Activated CD4-positive, alpha-beta T cell treated with anti-CD3 and anti-CD28 coated beads, Interleukin-2, amount 10 ng/mL, durations not matched to agents 7 days and 5 days (primary cell): ENCODE measurements at regions of chr17 and their contacts with region 1.

Region 1: DNA sequence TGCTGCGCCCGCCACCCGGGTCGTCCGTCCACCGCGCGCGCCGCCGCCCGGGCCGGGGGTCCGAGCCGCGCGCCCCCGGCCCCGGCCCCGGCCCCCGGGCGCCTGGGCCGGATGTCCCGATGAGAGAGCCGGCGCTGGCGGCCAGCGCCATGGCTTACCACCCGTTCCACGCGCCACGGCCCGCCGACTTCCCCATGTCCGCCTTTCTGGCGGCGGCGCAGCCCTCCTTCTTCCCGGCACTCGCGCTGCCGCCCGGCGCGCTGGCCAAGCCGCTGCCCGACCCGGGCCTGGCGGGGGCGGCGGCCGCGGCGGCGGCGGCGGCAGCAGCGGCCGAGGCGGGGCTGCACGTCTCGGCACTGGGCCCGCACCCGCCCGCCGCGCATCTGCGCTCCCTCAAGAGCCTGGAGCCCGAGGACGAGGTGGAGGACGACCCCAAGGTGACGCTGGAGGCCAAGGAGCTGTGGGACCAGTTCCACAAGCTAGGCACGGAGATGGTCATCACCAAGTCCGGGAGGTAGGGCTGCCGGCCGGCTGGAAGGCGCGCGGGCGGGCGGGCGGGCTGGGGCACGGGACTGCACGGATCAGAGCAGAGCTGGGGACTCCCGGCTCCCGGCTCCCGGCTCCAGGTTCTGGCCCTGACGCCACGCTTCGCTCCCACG is 544 bp downstream of the TBX2 start:
- DNase-seq: no peak
- H3K4me3 Mint-ChIP-seq: peak overlapping the region; percentile 38
- H3K27ac Mint-ChIP-seq: no peak overlapping the region
- H3K4me1 Mint-ChIP-seq: peaks cover 29% of the 10 kb centered on the region
- H3K27me3 Mint-ChIP-seq: peaks cover 61% of the 10 kb centered on the region

Region 2: DNA sequence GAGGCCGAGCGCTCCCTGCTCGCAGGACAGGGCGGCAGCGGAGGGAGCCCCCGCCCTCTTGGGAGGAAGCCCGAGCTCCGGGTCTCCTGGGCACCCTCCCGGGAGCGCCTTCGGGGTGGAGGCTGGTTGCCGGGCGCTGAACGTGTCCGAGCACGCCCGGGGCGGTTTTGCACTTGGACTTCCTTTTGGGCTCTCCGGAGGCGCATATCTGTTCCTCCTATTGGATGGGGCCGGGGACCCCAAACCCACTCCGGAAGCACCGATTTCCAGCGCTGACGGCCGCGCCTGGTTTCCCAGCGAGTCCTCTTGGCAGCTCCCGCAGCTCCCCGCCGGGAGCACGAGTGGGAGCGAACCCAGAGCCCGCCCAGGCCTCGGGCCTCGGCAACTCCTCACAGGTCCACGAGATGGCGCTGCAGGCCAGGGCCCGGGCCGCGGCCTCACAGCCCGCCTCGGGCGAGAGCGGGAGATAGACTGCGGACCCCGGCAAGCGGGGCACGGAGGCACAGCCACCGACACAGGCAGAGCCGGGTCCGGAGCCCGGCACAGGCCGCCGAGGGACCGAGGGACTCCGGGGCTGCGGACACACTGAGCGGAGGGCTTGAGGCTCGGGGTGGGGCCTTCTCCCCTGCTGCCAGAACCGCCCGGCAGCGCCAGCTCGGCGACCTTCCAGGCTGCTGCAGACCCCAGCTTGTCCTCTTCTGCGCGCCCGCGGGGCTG is 12.1 kb after region 1 on chr17:
- CTCF ChIA-PET with region 1: interaction called, 17 read pairs
- POLR2A ChIA-PET with region 1: no interaction called
- DNase-seq: peak; percentile 67
- H3K4me3 Mint-ChIP-seq: peak overlapping the region; percentile 50
- H3K27ac Mint-ChIP-seq: no peak overlapping the region
- H3K4me1 Mint-ChIP-seq: peaks cover 19% of the 10 kb centered on the region
- H3K27me3 Mint-ChIP-seq: peaks cover 49% of the 10 kb centered on the region